PC-9 (cell line): ENCODE measurements at regions of chr12 and their contacts with region 1.

Region 1: DNA sequence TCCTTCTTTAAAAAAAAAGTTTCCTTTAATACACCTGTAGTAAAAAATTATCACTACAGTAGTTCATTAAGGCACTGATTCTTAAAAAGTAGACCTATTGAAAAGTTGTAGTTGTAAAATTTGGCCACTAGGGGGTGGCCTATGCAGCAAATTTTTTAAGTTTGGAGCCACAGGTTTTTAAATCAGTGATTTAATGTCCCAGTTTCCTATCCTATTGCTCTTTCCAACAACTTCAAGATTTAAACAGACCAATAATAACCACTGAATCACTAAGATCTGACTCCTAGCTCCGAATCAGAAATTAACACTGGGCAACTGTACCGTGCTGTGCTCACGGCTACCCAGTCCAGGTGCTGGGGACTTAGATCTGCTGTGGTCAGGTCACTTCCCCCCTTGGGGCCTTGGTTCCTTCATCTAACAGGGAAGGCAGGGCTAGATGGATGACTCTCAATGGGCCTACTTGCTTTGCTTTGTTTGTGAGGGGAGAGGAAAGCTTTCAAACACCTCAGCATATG is 279.3 kb downstream of the MED13L start:
- DNase-seq: peak in 1 of 2 experiments; percentile 2
- H3K4me3 ChIP-seq: no peak overlapping the region
- H3K27ac ChIP-seq: 0 out of 2 replicates have a peak overlapping the region, but pooled peaks have one; percentile 34
- H3K4me1 ChIP-seq: peaks cover 9% of the 10 kb centered on the region; the same call in 1 of the 2 replicates
- H3K27me3 ChIP-seq: no peaks in the 10 kb centered on the region
- CTCF ChIP-seq: peak; percentile 94

Region 2: GRCh38 chr12:115611477-115611876 is 386.7 kb before region 1 on chr12:
- CTCF ChIA-PET with region 1: no interaction called
- POLR2A ChIA-PET with region 1: no interaction called
- intact Hi-C with region 1: no loop called
- DNase-seq: no peak
- H3K4me3 ChIP-seq: no peak overlapping the region
- H3K27ac ChIP-seq: no peak overlapping the region
- H3K4me1 ChIP-seq: no peaks in the 10 kb centered on the region
- H3K27me3 ChIP-seq: peaks cover 38% of the 10 kb centered on the region
- CTCF ChIP-seq: no peak

Region 3: GRCh38 chr12:115885038-115885690 is 113.0 kb before region 1 on chr12:
- CTCF ChIA-PET with region 1: no interaction called
- POLR2A ChIA-PET with region 1: no interaction called
- intact Hi-C with region 1: no loop called
- DNase-seq: peak in 1 of 2 experiments; percentile 57
- H3K4me3 ChIP-seq: no peak overlapping the region
- H3K27ac ChIP-seq: no peak overlapping the region
- H3K4me1 ChIP-seq: 0 out of 2 replicates have a peak, but pooled peaks cover 6% of the 10 kb centered on the region
- H3K27me3 ChIP-seq: no peaks in the 10 kb centered on the region
- CTCF ChIP-seq: no peak

Region 4: DNA sequence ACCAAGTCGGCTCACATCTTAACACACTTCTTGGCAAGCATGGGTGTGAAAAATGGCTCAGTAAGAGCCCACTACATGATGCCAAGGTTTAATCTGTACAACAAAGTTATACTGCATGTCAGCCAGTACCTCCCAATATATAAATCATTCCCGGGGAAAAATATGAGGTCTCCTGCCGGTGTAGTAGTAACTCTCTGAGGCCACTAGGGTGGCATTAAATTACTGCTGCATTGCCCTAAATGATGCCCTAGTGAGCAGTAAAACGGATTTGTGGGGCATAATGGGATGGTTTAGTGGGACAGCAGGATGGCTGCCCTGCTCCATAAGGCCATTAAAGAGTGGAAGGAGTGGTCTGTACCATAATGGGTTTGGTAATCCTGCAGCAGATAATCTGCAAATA is 11.6 kb after region 1 on chr12:
- CTCF ChIA-PET with region 1: no interaction called
- POLR2A ChIA-PET with region 1: no interaction called
- intact Hi-C with region 1: no loop called
- DNase-seq: no peak
- H3K4me3 ChIP-seq: no peak overlapping the region
- H3K27ac ChIP-seq: no peak overlapping the region
- H3K4me1 ChIP-seq: no peaks in the 10 kb centered on the region
- H3K27me3 ChIP-seq: no peaks in the 10 kb centered on the region
- CTCF ChIP-seq: peak; percentile 45; the same call in 1 of the 2 replicates

Region 5: GRCh38 chr12:116358893-116359761 is 361.0 kb after region 1 on chr12:
- CTCF ChIA-PET with region 1: no interaction called
- POLR2A ChIA-PET with region 1: no interaction called
- intact Hi-C with region 1: no loop called
- DNase-seq: peak; percentile 85 to 86
- H3K4me3 ChIP-seq: no peak overlapping the region
- H3K27ac ChIP-seq: peak overlapping the region; percentile 33; the same call in 1 of the 2 replicates
- H3K4me1 ChIP-seq: peaks cover 7% of the 10 kb centered on the region
- H3K27me3 ChIP-seq: no peaks in the 10 kb centered on the region
- CTCF ChIP-seq: no peak

Region 6: DNA sequence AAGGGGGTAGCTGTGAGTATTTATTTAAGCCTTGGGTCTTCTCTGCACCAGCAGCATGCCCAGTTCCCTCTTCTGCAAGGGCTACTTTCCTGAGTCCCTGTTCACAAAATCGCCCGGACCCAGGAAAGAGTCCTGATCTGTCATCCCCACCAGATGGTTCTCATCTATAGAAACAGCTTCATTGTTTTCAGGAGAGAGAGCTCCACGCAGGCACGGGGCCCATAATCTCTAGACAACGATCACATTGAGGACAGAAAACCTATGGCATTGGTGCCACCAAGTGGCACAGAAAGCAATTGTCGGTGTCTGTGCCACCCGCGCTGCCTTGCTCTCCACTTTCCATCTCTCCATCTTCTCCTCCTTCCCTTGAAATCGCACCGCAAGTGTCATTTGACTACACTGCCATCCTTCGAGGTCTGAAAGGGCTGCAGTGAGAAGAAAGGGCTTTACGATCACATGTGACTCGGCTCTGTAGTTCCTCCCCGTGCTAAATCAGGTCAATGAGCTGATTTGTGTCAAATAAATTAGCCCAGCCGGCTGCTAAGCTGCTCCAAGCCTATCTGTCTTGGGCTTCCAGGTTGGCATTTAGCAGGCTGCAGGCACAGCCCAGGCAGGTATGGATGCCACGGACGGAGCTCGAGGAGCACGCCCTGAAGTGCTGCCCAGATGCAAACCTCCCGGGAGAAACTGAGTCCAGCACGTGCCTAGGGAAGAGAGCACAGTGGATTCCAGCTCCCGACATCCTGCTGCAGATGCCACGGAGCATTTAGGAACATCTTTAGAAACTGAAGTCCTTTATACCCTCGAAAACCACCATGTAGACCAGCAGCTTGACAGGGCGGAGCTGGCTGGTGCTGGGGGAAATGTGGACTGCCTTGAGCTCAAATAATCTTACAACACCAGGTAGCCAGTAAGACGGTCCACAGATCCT is 710.9 kb after region 1 on chr12:
- CTCF ChIA-PET with region 1: interaction called, 3 read pairs
- POLR2A ChIA-PET with region 1: no interaction called
- intact Hi-C with region 1: loop called (anchors 1 kb)
- DNase-seq: peak; percentile 54 to 60
- H3K4me3 ChIP-seq: peak overlapping the region; percentile 30; the same call in 1 of the 2 replicates
- H3K27ac ChIP-seq: no peak overlapping the region
- H3K4me1 ChIP-seq: no peaks in the 10 kb centered on the region
- H3K27me3 ChIP-seq: no peaks in the 10 kb centered on the region
- CTCF ChIP-seq: peak; percentile 78